ENCODE measurements at regions of chr10 and their contacts with region 1.

Region 1: GRCh38 chr10:88759366-88760101 is at the start of gene LIPN:
- DNase-seq: no peak
- H3K4me3 Mint-ChIP-seq: no peak within 1 kb of the TSS
- H3K27ac Mint-ChIP-seq: no peak within 1 kb of the TSS
- H3K4me1 Mint-ChIP-seq: peaks cover 13% of the 10 kb centered on the region
- H3K27me3 Mint-ChIP-seq: peaks cover 5% of the 10 kb centered on the region
- total RNA-seq, gene LIPN: not detected

Region 2: GRCh38 chr10:88064608-88065382 is 694.7 kb before region 1 on chr10:
- CTCF ChIA-PET with region 1: no interaction called
- intact Hi-C with region 1: loop called (anchors 10 kb)
- DNase-seq: peak; percentile 34
- H3K4me3 Mint-ChIP-seq: no peak overlapping the region
- H3K27ac Mint-ChIP-seq: no peak overlapping the region
- H3K4me1 Mint-ChIP-seq: peaks cover 68% of the 10 kb centered on the region
- H3K27me3 Mint-ChIP-seq: peaks cover 11% of the 10 kb centered on the region

Region 3: GRCh38 chr10:88642978-88643377 is 116.6 kb before region 1 on chr10:
- CTCF ChIA-PET with region 1: no interaction called
- intact Hi-C with region 1: loop called (anchors 1 kb)
- DNase-seq: no peak
- H3K4me3 Mint-ChIP-seq: no peak overlapping the region
- H3K27ac Mint-ChIP-seq: no peak overlapping the region
- H3K4me1 Mint-ChIP-seq: no peaks in the 10 kb centered on the region
- H3K27me3 Mint-ChIP-seq: peaks cover 9% of the 10 kb centered on the region

Region 4: GRCh38 chr10:88707429-88708285 is 51.9 kb before region 1 on chr10:
- CTCF ChIA-PET with region 1: interaction called, 4 read pairs
- intact Hi-C with region 1: loop called (anchors 1 kb)
- DNase-seq: peak; percentile 37
- H3K4me3 Mint-ChIP-seq: no peak overlapping the region
- H3K27ac Mint-ChIP-seq: no peak overlapping the region
- H3K4me1 Mint-ChIP-seq: peaks cover 18% of the 10 kb centered on the region
- H3K27me3 Mint-ChIP-seq: peaks cover 3% of the 10 kb centered on the region

Region 5: GRCh38 chr10:88791924-88792323 is 32.4 kb after region 1 on chr10:
- CTCF ChIA-PET with region 1: no interaction called
- intact Hi-C with region 1: loop called (anchors 1 kb)
- DNase-seq: peak; percentile 25
- H3K4me3 Mint-ChIP-seq: no peak overlapping the region
- H3K27ac Mint-ChIP-seq: no peak overlapping the region
- H3K4me1 Mint-ChIP-seq: peaks cover 19% of the 10 kb centered on the region
- H3K27me3 Mint-ChIP-seq: peaks cover 4% of the 10 kb centered on the region

Region 6: DNA sequence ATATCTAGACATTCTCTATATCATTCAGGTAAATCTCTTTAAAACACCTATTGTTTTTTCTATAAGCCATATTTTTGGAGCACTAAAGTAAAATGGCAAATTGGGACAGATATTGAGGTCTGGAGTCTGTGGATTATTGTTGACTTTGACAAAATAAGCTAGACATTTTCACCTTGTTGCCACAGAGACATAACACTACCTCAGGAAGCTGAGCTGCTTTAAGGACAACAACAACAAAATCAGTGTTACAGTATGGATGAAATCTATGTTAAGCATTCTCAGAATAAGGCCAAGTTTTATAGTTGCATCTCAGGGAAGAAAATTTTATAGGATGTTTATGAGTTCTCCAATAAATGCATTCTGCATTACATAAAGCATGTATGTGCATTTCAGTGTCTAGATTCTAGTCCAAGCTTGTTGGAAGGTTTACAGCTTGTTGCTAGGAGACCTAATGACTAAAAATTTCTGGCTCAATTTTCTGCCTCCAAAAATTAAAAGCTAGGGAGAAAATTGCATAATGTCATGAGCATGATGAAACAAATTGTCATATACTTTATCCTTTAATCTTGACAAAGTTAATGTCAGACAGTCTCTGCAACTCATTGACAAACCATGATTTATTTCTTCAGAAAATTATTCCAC is 61.3 kb after region 1 on chr10:
- CTCF ChIA-PET with region 1: no interaction called
- intact Hi-C with region 1: loop called (anchors 1 kb)
- DNase-seq: no peak
- H3K4me3 Mint-ChIP-seq: no peak overlapping the region
- H3K27ac Mint-ChIP-seq: no peak overlapping the region
- H3K4me1 Mint-ChIP-seq: peaks cover 27% of the 10 kb centered on the region
- H3K27me3 Mint-ChIP-seq: no peaks in the 10 kb centered on the region

Measured in activated naive CD4-positive, alpha-beta T cell treated with anti-CD3 and anti-CD28 coated beads for 36 hours (primary cell).